CD8-positive, alpha-beta T cell (primary cell): ENCODE measurements at regions of chr14 and their contacts with region 1.

Region 1: DNA sequence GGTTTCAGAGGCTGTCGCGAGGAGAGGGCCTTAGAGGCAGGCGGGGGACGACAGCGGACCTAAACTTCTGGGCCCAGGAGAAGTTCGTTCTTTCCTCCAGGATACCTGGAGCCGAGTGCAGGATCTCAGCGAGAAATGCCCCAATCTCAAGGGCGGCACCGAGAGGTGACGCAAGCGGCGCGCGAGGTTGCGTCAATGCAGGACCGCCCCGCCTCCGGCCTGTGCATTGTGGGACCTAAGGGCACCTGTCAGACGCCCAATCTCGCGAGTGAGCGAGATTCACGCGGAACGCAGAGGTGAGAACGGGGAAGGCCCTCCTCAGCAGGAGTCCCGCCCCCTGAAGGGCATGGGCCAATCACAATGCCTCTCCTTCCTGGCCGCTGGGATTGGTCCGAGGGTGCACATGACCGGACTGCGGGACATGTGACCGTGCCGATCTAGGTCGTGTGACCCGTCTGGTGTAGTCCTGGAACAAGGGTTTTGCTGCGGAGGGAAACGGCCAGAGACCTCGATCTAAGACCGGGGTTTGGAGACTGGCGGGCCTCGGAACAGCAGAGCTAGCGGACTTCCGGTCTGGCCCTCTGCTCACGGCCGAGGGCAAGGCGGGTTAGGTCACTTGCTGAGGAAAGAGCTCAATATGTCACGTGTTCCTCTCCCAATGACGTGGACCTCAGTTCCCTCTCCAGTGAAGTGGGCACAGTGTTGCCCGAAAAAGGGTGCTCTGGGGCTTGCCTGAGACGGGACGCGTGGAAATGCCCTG is 16.3 kb upstream of the DYNC1H1 start:
- DNase-seq: peak; percentile 98 to 100 (median 99)
- ATAC-seq: peak; percentile 95
- H3K4me3 ChIP-seq: peak overlapping the region; percentile 81 to 82
- H3K4me3 Mint-ChIP-seq: peak overlapping the region; percentile 93
- H3K27ac ChIP-seq: peak overlapping the region; percentile 95 to 100
- H3K27ac Mint-ChIP-seq: peak overlapping the region; percentile 99
- H3K4me1 ChIP-seq: peaks cover 14% of the 10 kb centered on the region
- H3K4me1 Mint-ChIP-seq: peaks cover 20% of the 10 kb centered on the region
- H3K27me3 ChIP-seq: peaks cover 0 to 6% of the 10 kb centered on the region in 2 experiments
- H3K27me3 Mint-ChIP-seq: peaks cover 23% of the 10 kb centered on the region
- CTCF ChIP-seq: no peak

Region 2: GRCh38 chr14:101635749-101636560 is 312.1 kb before region 1 on chr14:
- CTCF ChIA-PET with region 1: no interaction called
- POLR2A ChIA-PET with region 1: no interaction called
- intact Hi-C with region 1: no loop called
- DNase-seq: no peak
- ATAC-seq: no peak
- H3K4me3 ChIP-seq: no peak overlapping the region
- H3K4me3 Mint-ChIP-seq: no peak overlapping the region
- H3K27ac ChIP-seq: no peak overlapping the region
- H3K27ac Mint-ChIP-seq: no peak overlapping the region
- H3K4me1 ChIP-seq: no peaks in the 10 kb centered on the region
- H3K4me1 Mint-ChIP-seq: peaks cover 5% of the 10 kb centered on the region
- H3K27me3 ChIP-seq: peaks cover 0 to 5% of the 10 kb centered on the region in 2 experiments
- H3K27me3 Mint-ChIP-seq: peaks cover 23% of the 10 kb centered on the region
- CTCF ChIP-seq: no peak

Region 3: DNA sequence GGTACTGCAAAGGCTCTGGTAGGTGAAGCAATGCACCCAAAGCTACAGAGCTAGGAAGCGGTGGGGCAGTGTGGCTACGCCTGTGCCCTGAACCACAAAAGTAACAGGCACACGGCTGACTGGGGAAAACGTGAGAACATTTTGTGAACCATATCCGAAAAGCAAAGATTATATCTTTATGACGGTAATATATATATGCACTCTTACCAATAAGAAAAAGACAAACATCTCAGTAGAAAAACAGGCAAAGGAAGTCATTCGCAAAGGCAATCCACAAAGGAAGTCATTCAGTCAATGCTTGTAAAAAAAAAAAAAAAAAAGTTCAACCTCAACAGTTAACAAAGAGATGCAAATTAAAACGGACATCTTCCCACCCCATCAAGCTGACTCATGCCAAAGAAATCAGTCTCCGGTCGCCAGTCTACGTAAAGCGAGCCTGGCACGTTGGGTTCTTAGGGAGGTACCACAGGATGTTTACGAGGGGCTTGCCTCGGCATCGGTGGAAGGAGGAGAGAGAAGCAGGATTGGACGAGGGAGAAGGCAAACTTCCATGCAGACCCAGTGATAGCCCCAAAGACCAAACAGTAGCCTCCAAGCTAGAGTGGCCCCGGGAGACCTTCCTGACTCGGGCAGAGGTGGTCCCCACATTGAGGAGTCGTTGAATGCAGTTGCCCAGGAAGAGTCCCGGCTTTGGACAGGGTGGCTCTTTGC is 226.0 kb before region 1 on chr14:
- CTCF ChIA-PET with region 1: no interaction called
- POLR2A ChIA-PET with region 1: interaction called, 4 read pairs
- intact Hi-C with region 1: loop called in 1 of 2 experiments (anchors 5 kb)
- DNase-seq: peak; percentile 60 to 97 (median 79)
- ATAC-seq: peak; percentile 80
- H3K4me3 ChIP-seq: peak overlapping the region; percentile 27 to 42
- H3K4me3 Mint-ChIP-seq: peak overlapping the region; percentile 51
- H3K27ac ChIP-seq: peak overlapping the region; percentile 89 to 94
- H3K27ac Mint-ChIP-seq: peak overlapping the region; percentile 95
- H3K4me1 ChIP-seq: peaks cover 38% of the 10 kb centered on the region
- H3K4me1 Mint-ChIP-seq: peaks cover 57% of the 10 kb centered on the region
- H3K27me3 ChIP-seq: no peaks in the 10 kb centered on the region
- H3K27me3 Mint-ChIP-seq: no peaks in the 10 kb centered on the region
- CTCF ChIP-seq: no peak

Region 4: DNA sequence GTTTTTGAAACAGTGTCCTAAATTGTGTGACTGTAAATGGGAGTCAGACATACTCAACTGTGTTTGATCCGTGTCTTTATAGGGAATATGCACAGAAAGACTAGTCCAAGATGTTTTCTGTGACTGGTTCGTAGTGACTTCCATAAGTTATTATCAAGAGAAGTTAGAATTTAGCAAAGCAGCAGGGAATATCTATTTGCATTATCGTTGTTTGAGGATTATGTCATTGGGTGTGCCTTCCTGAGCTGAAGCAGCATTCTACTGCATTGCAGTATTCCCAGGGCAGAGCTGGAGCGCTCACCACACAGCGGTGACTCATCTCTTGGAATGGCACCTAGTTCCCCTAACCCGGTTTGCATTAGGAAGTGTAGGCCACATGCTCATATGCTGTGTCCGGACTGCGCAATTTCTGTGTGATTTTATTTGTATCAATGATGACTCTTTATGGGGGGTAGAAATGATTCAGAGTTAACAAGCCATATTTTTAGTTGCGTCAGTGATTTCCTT is 24.2 kb after region 1 on chr14:
- CTCF ChIA-PET with region 1: no interaction called
- POLR2A ChIA-PET with region 1: no interaction called
- intact Hi-C with region 1: no loop called
- DNase-seq: peak in 1 of 9 experiments; percentile 40
- ATAC-seq: no peak
- H3K4me3 ChIP-seq: no peak overlapping the region
- H3K4me3 Mint-ChIP-seq: no peak overlapping the region
- H3K27ac ChIP-seq: no peak overlapping the region
- H3K27ac Mint-ChIP-seq: peak overlapping the region; percentile 6
- H3K4me1 ChIP-seq: peaks cover 12% of the 10 kb centered on the region
- H3K4me1 Mint-ChIP-seq: peaks cover 48% of the 10 kb centered on the region
- H3K27me3 ChIP-seq: no peaks in the 10 kb centered on the region
- H3K27me3 Mint-ChIP-seq: no peaks in the 10 kb centered on the region
- CTCF ChIP-seq: no peak

Region 5: GRCh38 chr14:102086972-102087761 is 139.1 kb after region 1 on chr14 and contains the start of gene HSP90AA1:
- CTCF ChIA-PET with region 1: no interaction called
- POLR2A ChIA-PET with region 1: no interaction called
- intact Hi-C with region 1: loop called (anchors 1 to 2 kb)
- DNase-seq: peak; percentile 88 to 98 (median 95)
- ATAC-seq: peak; percentile 74
- H3K4me3 ChIP-seq: peak within 1 kb of the TSS; percentile 75 to 78
- H3K4me3 Mint-ChIP-seq: peak within 1 kb of the TSS; percentile 97
- H3K27ac ChIP-seq: peak within 1 kb of the TSS; percentile 96 to 97
- H3K27ac Mint-ChIP-seq: peak within 1 kb of the TSS; percentile 99
- H3K4me1 ChIP-seq: peaks cover 49% of the 10 kb centered on the region
- H3K4me1 Mint-ChIP-seq: peaks cover 58% of the 10 kb centered on the region
- H3K27me3 ChIP-seq: no peaks in the 10 kb centered on the region
- H3K27me3 Mint-ChIP-seq: no peaks in the 10 kb centered on the region
- CTCF ChIP-seq: no peak
- total RNA-seq, gene HSP90AA1: 532 to 539 TPM

Region 6: DNA sequence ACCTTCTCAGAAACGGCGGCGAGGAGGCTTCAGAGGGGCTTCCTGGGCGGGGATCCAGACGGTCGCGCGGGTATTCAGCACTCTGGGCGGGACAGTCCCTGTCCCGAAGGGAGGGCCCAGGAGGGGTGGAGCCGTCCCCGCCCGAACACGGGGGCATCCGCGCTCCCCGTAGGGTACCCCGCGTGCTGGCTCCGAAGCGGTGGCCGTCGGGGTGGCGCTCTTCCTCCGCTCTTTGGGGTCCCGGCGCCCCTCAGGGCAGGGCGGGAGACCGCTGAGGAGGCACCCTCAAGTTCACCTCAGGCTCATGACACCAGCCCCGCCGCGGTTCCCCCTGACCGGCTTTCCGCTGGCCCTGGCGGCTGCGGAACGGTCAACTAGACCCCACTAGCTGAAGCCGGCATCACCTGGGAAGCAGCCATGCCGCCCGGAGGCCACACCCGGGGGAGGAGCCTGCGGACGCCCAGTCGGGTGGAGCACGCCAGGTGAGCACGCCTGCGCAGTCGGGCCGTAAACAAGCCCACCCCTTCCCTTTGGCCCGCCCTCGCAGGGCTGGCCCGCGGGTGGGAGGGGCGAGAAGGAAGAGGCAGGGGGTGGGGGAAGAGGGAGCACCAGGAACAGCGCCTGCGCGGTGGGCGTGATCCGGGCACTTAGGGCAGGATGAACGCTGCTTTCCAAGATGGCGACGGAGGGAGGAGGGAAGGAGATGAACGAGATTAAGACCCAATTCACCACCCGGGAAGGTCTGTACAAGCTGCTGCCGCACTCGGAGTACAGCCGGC is 191.4 kb after region 1 on chr14 and contains the start of gene WDR20:
- CTCF ChIA-PET with region 1: no interaction called
- POLR2A ChIA-PET with region 1: interaction called, 4 read pairs
- intact Hi-C with region 1: loop called in 1 of 2 experiments (anchors 1 kb)
- DNase-seq: peak; percentile 98 to 100 (median 99)
- ATAC-seq: peak; percentile 96
- H3K4me3 ChIP-seq: peak within 1 kb of the TSS; percentile 94 to 95
- H3K4me3 Mint-ChIP-seq: peak within 1 kb of the TSS; percentile 99
- H3K27ac ChIP-seq: peak within 1 kb of the TSS; percentile 87 to 91
- H3K27ac Mint-ChIP-seq: peak within 1 kb of the TSS; percentile 98
- H3K4me1 ChIP-seq: peaks cover 25% of the 10 kb centered on the region
- H3K4me1 Mint-ChIP-seq: peaks cover 29% of the 10 kb centered on the region
- H3K27me3 ChIP-seq: no peaks in the 10 kb centered on the region
- H3K27me3 Mint-ChIP-seq: no peaks in the 10 kb centered on the region
- CTCF ChIP-seq: no peak
- total RNA-seq, gene WDR20: 40.8 to 46.3 TPM

Region 7: DNA sequence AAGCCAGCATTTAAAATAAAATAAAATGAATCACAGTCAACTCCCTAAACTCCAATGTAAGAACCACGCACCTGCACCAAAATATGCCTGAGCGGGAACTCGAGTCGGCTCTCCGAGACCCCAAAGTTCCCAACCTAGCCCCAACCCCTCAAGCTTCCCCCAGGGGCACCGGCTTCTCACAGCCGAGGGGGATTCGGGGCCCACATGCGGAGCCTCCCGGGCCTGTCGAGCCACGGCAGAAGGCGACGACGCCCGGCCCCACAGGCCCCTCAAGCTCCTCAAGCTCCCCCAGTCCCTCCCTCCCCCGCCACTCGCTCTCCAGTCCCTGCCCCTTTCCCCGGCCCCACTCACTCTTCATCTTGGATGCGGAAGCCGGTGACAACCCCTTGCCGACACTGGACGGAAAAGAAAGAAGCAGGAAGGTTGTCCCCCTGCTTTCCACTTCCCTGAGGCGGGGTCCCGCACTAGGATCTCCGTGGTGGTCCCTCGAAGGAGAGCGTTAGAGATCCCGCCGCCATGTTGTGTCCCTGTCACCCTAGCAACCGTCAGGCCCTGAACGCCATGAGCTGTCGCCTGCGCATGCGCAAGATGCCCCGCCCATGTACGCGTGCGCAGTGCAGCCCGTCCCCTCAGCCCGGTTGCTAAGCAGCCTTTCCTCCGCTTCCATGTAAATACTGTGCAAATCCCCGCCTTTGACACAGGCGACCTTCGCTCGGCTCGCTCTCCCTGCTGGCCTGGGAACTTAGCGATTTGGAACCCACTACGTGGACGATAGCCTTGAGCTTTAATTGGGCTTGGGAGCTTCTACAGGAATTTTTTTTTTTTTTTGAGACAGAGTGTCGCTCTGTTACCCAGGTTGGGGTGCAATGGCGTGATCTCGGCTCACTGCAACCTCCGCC is 356.8 kb after region 1 on chr14 and contains the start of gene MOK:
- CTCF ChIA-PET with region 1: no interaction called
- POLR2A ChIA-PET with region 1: no interaction called
- intact Hi-C with region 1: loop called in 1 of 2 experiments (anchors 1 kb)
- DNase-seq: peak; percentile 94 to 99 (median 98)
- ATAC-seq: peak; percentile 92
- H3K4me3 ChIP-seq: peak within 1 kb of the TSS; percentile 83 to 97
- H3K4me3 Mint-ChIP-seq: peak within 1 kb of the TSS; percentile 91
- H3K27ac ChIP-seq: peak within 1 kb of the TSS; percentile 84 to 88
- H3K27ac Mint-ChIP-seq: peak within 1 kb of the TSS; percentile 94
- H3K4me1 ChIP-seq: peaks cover 5% of the 10 kb centered on the region
- H3K4me1 Mint-ChIP-seq: peaks cover 10% of the 10 kb centered on the region
- H3K27me3 ChIP-seq: no peaks in the 10 kb centered on the region
- H3K27me3 Mint-ChIP-seq: peaks cover 2% of the 10 kb centered on the region
- CTCF ChIP-seq: no peak
- total RNA-seq, gene MOK: 2.7 to 3.6 TPM

Region 8: GRCh38 chr14:102362545-102363181 is 414.6 kb after region 1 on chr14 and contains the starts of genes CINP and TECPR2:
- CTCF ChIA-PET with region 1: no interaction called
- POLR2A ChIA-PET with region 1: no interaction called
- intact Hi-C with region 1: loop called (anchors 1 kb)
- DNase-seq: peak; percentile 93 to 97 (median 96)
- ATAC-seq: peak; percentile 90
- H3K4me3 ChIP-seq: peak within 1 kb of the TSS; percentile 67 to 75
- H3K4me3 Mint-ChIP-seq: peak within 1 kb of the TSS; percentile 95
- H3K27ac ChIP-seq: peak within 1 kb of the TSS; percentile 82 to 86
- H3K27ac Mint-ChIP-seq: peak within 1 kb of the TSS; percentile 96
- H3K4me1 ChIP-seq: peaks cover 15% of the 10 kb centered on the region
- H3K4me1 Mint-ChIP-seq: peaks cover 24% of the 10 kb centered on the region
- H3K27me3 ChIP-seq: no peaks in the 10 kb centered on the region
- H3K27me3 Mint-ChIP-seq: no peaks in the 10 kb centered on the region
- CTCF ChIP-seq: no peak
- total RNA-seq, gene CINP: 15.9 to 19.2 TPM
- total RNA-seq, gene TECPR2: 3.4 to 5.8 TPM